ENCODE measurements at regions of chr1 and their contacts with region 1.

Region 1: GRCh38 chr1:46667782-46668760 is at the start of gene ATPAF1:
- DNase-seq: peak; percentile 59 to 76
- ATAC-seq: peak; percentile 84 to 95 (median 89)
- H3K4me3 ChIP-seq: peak within 1 kb of the TSS; percentile 74 to 99 (median 93)
- H3K27ac ChIP-seq: peak within 1 kb of the TSS; percentile 72 to 92 (median 87)
- H3K4me1 ChIP-seq: peaks cover 4 to 32% (median 22%) of the 10 kb centered on the region in 9 donors
- H3K27me3 ChIP-seq: no peaks in the 10 kb centered on the region
- CTCF ChIP-seq: no peak
- total RNA-seq, gene ATPAF1: 157 to 271 (median 209) TPM

Region 2: DNA sequence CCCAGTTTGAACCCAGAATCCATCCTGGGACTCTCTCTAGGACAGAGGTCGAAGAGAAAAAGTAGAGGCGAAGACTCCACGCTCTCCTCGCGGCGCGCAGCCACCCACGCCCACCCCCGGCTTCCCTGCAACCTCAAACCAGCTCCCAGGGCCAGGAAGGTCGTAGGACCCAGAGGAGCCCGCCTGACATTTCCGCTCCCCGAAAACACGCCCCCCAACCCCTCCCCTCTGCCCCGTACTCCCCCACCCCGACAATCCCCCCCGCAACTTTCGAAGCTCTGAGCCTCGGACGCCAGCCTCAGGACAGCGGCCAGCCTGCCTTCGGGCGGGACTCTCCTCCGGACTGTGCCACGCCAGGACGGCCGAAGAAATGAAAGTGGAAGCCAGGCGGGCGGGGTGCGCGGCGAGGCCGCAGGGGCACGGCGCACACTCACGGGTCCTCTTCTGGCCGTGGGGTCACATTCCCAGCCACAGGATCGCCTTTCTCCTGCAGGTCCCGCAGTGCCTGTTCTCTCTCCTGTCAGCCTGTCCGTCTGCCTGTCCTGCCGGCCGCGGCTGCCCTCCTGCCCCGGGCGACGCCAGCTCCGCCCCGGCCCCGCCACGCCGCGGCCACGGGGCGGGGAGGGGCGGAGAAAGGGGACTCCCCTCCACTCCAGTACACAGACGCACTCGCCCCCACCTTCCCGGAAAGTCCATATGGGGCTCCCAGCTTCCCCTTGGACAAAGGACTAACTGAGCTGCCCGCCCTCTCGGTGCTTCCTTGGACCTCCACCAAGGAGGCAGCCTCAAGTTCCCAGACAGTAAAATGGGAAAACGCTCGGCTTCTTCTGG is 51.6 kb before region 1 on chr1 and contains the start of gene MOB3C:
- intact Hi-C with region 1: loop called in 4 of 10 experiments (anchors 5 to 10 kb)
- DNase-seq: peak; percentile 88 to 94
- ATAC-seq: peak; percentile 89 to 93 (median 92)
- H3K4me3 ChIP-seq: peak within 1 kb of the TSS; percentile 43 to 95 (median 84)
- H3K27ac ChIP-seq: peak within 1 kb of the TSS; percentile 56 to 98 (median 92)
- H3K4me1 ChIP-seq: peaks cover 25 to 54% (median 51%) of the 10 kb centered on the region in 9 donors
- H3K27me3 ChIP-seq: no peaks in the 10 kb centered on the region
- CTCF ChIP-seq: no peak
- total RNA-seq, gene MOB3C: 8.6 to 16.9 (median 12.2) TPM

Region 3: GRCh38 chr1:46653405-46653958 is 14.6 kb before region 1 on chr1:
- intact Hi-C with region 1: no loop called
- DNase-seq: no peak
- ATAC-seq: no peak
- H3K4me3 ChIP-seq: no peak overlapping the region
- H3K27ac ChIP-seq: peak overlapping the region in 6 of 10 donors; percentile 28 to 55 (median 42)
- H3K4me1 ChIP-seq: peaks cover 0 to 28% (median 3%) of the 10 kb centered on the region in 9 donors
- H3K27me3 ChIP-seq: no peaks in the 10 kb centered on the region
- CTCF ChIP-seq: no peak

Region 4: GRCh38 chr1:46691997-46692790 is 24.1 kb after region 1 on chr1:
- intact Hi-C with region 1: loop called in 1 of 10 experiments (anchors 2 kb)
- DNase-seq: peak in 1 of 2 donors; percentile 33
- ATAC-seq: peak in 1 of 8 donors; percentile 47
- H3K4me3 ChIP-seq: no peak overlapping the region
- H3K27ac ChIP-seq: peak overlapping the region in 1 of 10 donors; percentile 23
- H3K4me1 ChIP-seq: peaks cover 0 to 38% (median 27%) of the 10 kb centered on the region in 9 donors
- H3K27me3 ChIP-seq: no peaks in the 10 kb centered on the region
- CTCF ChIP-seq: peak in 1 of 9 donors; percentile 11